ENCODE measurements at regions of chr7 and their contacts with region 1.

Region 1: GRCh38 chr7:101273206-101273605 is 28.3 kb upstream of the FIS1 start:
- DNase-seq: no peak

Region 2: GRCh38 chr7:100957832-100958421 is 315.3 kb before region 1 on chr7:
- intact Hi-C with region 1: no loop called
- DNase-seq: no peak

Region 3: GRCh38 chr7:101165075-101165957 is 107.9 kb before region 1 on chr7 and contains the start of gene VGF:
- intact Hi-C with region 1: loop called in 1 of 2 experiments (anchors 10 kb)
- DNase-seq: peak; percentile 98
- total RNA-seq, gene VGF: not detected